ENCODE measurements at regions of chr18 and their contacts with region 1.

Region 1: GRCh38 chr18:31942999-31943865 is at the start of gene TRAPPC8:
- DNase-seq: peak; percentile 96
- H3K4me3 Mint-ChIP-seq: peak within 1 kb of the TSS; percentile 100
- H3K27ac Mint-ChIP-seq: peak within 1 kb of the TSS; percentile 97
- H3K4me1 Mint-ChIP-seq: peaks cover 32% of the 10 kb centered on the region
- H3K27me3 Mint-ChIP-seq: no peaks in the 10 kb centered on the region
- total RNA-seq, gene TRAPPC8: 24.9 to 26.5 TPM

Region 2: DNA sequence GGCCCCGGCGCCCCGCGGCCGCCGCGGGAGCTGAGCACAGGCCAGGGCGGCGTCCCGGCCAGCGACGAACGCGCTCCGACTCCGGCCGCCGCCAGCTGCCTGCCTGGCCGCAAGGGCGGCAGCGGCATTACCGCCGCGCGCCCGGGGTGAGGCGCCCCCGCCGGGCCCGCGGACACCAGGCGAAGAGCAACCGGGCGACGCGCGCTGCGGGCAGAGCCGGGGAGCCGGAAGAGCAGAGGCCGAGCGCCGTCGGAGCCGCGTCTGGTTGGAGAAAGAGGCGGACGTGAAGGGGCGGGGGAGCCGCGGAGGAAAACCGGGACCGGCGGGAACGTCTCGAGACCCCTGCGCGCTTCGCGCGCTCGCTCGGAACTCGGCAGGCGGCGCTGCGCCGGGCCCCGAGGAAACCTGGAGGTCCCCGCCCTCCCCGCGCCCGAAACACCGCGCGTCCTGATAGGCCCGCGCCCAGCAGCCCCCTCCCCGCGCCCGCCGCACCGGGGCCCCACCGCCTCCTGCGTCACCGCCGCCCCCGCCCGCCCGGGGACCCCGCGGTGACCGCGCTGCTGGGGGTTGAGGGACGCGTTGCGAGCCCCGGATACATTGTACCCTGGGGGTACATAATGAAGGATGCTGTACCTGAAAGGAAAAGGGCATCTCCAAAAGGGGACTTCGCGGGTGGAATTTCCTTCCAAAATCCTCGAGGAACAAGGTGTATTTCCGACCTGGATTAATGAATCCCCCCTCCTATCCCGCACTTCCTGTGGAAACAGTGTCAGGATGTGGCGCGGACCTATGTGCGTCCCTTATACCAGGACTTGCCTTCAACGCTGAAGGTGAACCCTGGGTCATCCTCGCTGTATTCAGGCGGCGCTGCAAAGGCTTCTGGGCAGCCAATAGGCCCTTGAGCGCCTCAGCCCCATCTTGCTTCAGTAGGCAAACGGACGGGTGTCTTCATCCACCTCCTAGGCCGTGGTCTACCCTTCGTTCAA is 257.8 kb before region 1 on chr18:
- CTCF ChIA-PET with region 1: no interaction called
- intact Hi-C with region 1: loop called (anchors 1 kb)
- DNase-seq: peak; percentile 73
- H3K4me3 Mint-ChIP-seq: peak overlapping the region; percentile 84
- H3K27ac Mint-ChIP-seq: no peak overlapping the region
- H3K4me1 Mint-ChIP-seq: peaks cover 16% of the 10 kb centered on the region
- H3K27me3 Mint-ChIP-seq: peaks cover 38% of the 10 kb centered on the region

Region 3: DNA sequence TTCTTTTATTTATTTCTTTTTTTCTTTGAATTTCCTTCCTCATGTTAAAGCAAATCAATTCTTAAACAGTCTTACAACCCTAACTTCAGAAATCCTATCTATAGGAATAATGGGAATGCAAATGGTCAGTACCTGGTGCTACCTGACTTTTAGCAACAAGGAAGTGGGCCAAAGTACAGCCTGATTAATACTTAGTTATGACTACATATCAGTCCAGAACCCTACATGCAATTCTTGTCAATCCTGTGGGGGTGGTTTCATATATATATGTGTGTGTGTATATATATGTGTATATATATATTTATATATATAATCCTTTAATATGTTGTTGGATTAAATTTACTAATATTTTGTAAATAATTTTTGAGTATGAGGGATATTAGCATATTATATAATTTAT is 14.5 kb after region 1 on chr18:
- CTCF ChIA-PET with region 1: no interaction called
- intact Hi-C with region 1: loop called (anchors 1 kb)
- DNase-seq: no peak
- H3K4me3 Mint-ChIP-seq: no peak overlapping the region
- H3K27ac Mint-ChIP-seq: no peak overlapping the region
- H3K4me1 Mint-ChIP-seq: no peaks in the 10 kb centered on the region
- H3K27me3 Mint-ChIP-seq: no peaks in the 10 kb centered on the region

Region 4: DNA sequence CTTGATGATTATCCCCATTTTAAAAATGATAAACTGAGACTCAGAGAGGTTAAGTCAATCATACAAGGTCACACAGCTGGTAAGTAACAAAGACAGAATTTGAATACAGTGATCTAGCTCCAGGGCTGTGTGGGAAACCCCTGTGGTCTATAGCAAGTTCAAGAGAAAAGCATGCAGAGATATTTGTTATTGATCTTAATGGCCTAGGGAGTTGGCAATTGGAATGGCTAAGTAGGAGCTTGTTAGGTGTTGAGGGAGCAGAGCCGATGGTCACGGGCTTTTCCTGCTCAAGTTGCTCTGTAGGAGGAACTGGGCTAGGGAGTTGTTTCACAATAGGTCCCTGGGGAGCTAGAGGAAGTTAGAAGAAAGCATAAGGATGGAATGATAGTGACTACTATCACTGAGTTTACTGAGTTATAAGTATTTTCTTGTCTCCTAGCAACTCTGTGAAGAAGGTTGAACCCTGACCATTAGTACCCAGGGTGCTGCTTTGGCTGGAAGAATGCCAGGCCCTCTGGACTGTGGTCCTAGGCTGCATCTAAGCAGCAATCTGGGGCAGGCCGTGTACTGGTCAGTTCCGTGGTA is 105.4 kb after region 1 on chr18:
- CTCF ChIA-PET with region 1: no interaction called
- intact Hi-C with region 1: loop called (anchors 1 kb)
- DNase-seq: peak; percentile 30
- H3K4me3 Mint-ChIP-seq: no peak overlapping the region
- H3K27ac Mint-ChIP-seq: peak overlapping the region; percentile 81
- H3K4me1 Mint-ChIP-seq: peaks cover 23% of the 10 kb centered on the region
- H3K27me3 Mint-ChIP-seq: no peaks in the 10 kb centered on the region

Region 5: DNA sequence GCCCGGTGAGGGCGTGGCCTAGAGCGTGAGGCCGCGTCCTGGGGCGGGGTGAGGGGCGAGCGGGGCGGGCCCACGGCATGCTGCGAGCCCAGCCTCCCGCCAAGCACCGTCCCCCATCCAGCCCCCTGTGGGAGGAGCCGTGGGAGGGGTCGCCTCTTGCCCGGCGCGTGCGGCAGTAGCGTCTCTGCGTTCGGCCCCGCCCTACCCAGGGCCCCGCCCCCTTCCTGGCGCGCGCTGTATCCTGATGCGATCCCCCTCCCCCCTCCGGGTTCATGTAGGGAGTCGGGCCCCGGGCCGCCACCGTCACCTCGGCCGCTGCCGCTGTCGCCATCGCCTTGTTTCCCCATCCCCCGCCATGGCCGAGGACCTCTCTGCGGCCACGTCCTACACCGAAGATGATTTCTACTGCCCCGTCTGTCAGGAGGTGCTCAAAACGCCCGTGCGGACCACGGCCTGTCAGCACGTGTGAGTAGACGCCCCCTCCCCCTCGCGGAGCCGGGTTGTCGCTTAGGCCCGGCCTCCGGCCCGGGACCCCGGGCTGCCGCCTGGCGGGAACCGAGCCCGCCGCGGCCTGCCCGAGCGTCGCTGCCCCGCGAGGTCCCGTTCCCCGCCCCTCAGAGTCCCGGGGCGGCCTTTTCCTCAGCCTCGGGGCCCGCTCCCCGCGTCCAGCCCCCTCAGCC is 149.3 kb after region 1 on chr18:
- CTCF ChIA-PET with region 1: no interaction called
- intact Hi-C with region 1: loop called (anchors 1 kb)
- DNase-seq: peak; percentile 99
- H3K4me3 Mint-ChIP-seq: peak overlapping the region; percentile 97
- H3K27ac Mint-ChIP-seq: peak overlapping the region; percentile 98
- H3K4me1 Mint-ChIP-seq: peaks cover 42% of the 10 kb centered on the region
- H3K27me3 Mint-ChIP-seq: no peaks in the 10 kb centered on the region

Region 6: DNA sequence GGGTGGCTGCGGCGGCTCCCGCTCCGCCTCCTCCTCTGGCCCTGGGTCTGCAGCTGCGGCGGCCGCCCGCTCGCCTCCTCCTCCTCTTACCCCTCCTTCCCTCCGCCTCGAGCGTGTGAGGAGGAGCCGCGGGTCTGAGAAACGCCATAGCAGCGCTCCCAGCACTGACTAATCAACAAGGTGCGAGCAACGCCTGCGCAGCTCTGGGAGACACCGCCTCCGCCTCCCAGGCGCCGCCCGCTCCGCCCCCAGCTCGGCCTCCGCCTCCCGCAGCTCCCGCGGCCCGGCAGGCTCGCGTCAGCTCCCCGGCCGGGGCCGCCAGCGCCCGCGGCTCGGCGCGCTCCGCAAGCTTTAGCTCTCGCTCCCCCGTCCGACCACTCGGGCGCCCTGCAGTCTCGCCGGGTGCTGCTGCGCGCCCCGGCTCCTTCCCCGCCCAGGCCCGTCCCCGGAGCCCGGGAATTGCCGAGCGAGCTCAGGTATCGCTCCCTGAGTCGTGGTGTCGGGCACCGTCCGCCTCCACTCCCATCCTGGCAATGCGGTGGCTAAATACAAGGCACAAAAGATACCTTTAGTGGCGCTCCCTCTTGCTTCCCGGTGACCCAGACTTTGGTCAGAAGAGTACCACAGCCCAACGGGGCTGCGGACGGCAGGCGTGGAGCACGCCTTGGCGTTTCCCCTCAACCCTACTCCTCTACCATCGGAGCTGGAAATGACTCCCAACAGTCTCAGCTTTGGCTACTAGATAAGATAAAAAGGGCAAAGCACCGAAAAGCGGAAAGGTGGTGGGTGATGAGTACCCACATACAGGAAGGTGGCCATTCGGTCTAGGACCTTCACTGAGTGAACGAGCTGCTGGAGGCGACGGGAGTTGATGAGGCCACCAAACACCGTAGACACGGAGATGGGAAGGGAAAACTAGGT is 527.7 kb after region 1 on chr18 and contains the start of gene GAREM1:
- CTCF ChIA-PET with region 1: no interaction called
- intact Hi-C with region 1: loop called (anchors 1 kb)
- DNase-seq: peak; percentile 91
- H3K4me3 Mint-ChIP-seq: peak within 1 kb of the TSS; percentile 77
- H3K27ac Mint-ChIP-seq: no peak within 1 kb of the TSS
- H3K4me1 Mint-ChIP-seq: peaks cover 28% of the 10 kb centered on the region
- H3K27me3 Mint-ChIP-seq: peaks cover 36% of the 10 kb centered on the region
- total RNA-seq, gene GAREM1: 0.31 to 0.35 TPM